ENCODE measurements at regions of chr1 and their contacts with region 1.

Region 1: GRCh38 chr1:93154898-93155297 is 25.3 kb downstream of the TMED5 start:
- DNase-seq: no peak
- ATAC-seq: no peak
- H3K4me3 ChIP-seq: no peak overlapping the region
- H3K4me3 Mint-ChIP-seq: no peak overlapping the region
- H3K27ac ChIP-seq: no peak overlapping the region
- H3K27ac Mint-ChIP-seq: peak overlapping the region; percentile 18
- H3K4me1 ChIP-seq: no peaks in the 10 kb centered on the region
- H3K4me1 Mint-ChIP-seq: peaks cover 12% of the 10 kb centered on the region
- H3K27me3 ChIP-seq: no peaks in the 10 kb centered on the region
- H3K27me3 Mint-ChIP-seq: no peaks in the 10 kb centered on the region
- CTCF ChIP-seq: no peak

Region 2: DNA sequence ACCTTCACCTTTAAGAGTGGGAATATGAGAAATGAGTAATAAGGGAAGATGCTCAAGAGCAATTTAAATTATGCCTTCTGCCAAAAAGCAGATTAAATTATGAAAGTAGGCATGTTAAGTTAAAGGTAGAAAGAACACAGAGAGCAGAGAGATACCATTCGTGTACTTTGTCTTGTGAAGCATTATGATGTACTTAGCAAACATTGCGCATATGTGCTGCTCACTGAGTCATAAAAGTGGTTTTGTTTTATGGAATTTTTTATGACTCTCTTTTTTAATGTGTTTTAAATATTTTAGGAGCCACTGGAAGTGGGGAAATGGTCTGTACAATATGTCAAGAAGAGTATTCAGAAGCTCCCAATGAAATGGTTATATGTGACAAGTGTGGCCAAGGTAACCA is 40.5 kb before region 1 on chr1:
- CTCF ChIA-PET with region 1: no interaction called
- POLR2A ChIA-PET with region 1: no interaction called
- intact Hi-C with region 1: loop called in 1 of 2 experiments (anchors 5 kb)
- DNase-seq: no peak
- ATAC-seq: no peak
- H3K4me3 ChIP-seq: no peak overlapping the region
- H3K4me3 Mint-ChIP-seq: no peak overlapping the region
- H3K27ac ChIP-seq: no peak overlapping the region
- H3K27ac Mint-ChIP-seq: no peak overlapping the region
- H3K4me1 ChIP-seq: no peaks in the 10 kb centered on the region
- H3K4me1 Mint-ChIP-seq: peaks cover 16% of the 10 kb centered on the region
- H3K27me3 ChIP-seq: no peaks in the 10 kb centered on the region
- H3K27me3 Mint-ChIP-seq: no peaks in the 10 kb centered on the region
- CTCF ChIP-seq: no peak

Region 3: GRCh38 chr1:93129507-93130099 is 25.3 kb before region 1 on chr1:
- CTCF ChIA-PET with region 1: no interaction called
- POLR2A ChIA-PET with region 1: no interaction called
- intact Hi-C with region 1: no loop called
- DNase-seq: no peak
- ATAC-seq: no peak
- H3K4me3 ChIP-seq: no peak overlapping the region
- H3K4me3 Mint-ChIP-seq: no peak overlapping the region
- H3K27ac ChIP-seq: no peak overlapping the region
- H3K27ac Mint-ChIP-seq: no peak overlapping the region
- H3K4me1 ChIP-seq: no peaks in the 10 kb centered on the region
- H3K4me1 Mint-ChIP-seq: peaks cover 3% of the 10 kb centered on the region
- H3K27me3 ChIP-seq: no peaks in the 10 kb centered on the region
- H3K27me3 Mint-ChIP-seq: no peaks in the 10 kb centered on the region
- CTCF ChIP-seq: no peak